GM12878 (cell line): ENCODE measurements at regions of chrX and their contacts with region 1.

Region 1: GRCh38 chrX:133838761-133839676 is 146.4 kb downstream of the GPC3 start:
- DNase-seq: no peak
- ATAC-seq: peak; percentile 47
- H3K4me3 ChIP-seq: no peak overlapping the region
- H3K27ac ChIP-seq: no peak overlapping the region
- H3K4me1 ChIP-seq: no peaks in the 10 kb centered on the region
- H3K27me3 ChIP-seq: no peaks in the 10 kb centered on the region
- CTCF ChIP-seq: peak; percentile 40 to 65 (median 57); a peak in 5 of 6 replicates
- EP300 ChIP-seq: no peak
- POLR2A ChIP-seq: no peak
- RAD21 ChIP-seq: peak; percentile 41; the same call in 1 of the 2 replicates

Region 2: GRCh38 chrX:133921764-133922389 is 82.9 kb after region 1 on chrX:
- CTCF ChIA-PET with region 1: interaction called, 18 read pairs
- POLR2A ChIA-PET with region 1: no interaction called
- RAD21 ChIA-PET with region 1: no interaction called
- SMC1A ChIA-PET with region 1: interaction called, 3 read pairs
- in situ Hi-C with region 1: no loop called
- intact Hi-C with region 1: no loop called
- DNase-seq: no peak
- ATAC-seq: peak; percentile 89
- H3K4me3 ChIP-seq: no peak overlapping the region
- H3K27ac ChIP-seq: no peak overlapping the region
- H3K4me1 ChIP-seq: no peaks in the 10 kb centered on the region
- H3K27me3 ChIP-seq: no peaks in the 10 kb centered on the region
- CTCF ChIP-seq: peak; percentile 59 to 75 (median 68)
- EP300 ChIP-seq: no peak
- POLR2A ChIP-seq: no peak
- RAD21 ChIP-seq: peak; percentile 60

Region 3: GRCh38 chrX:133980406-133981186 is 141.6 kb after region 1 on chrX:
- CTCF ChIA-PET with region 1: no interaction called
- POLR2A ChIA-PET with region 1: no interaction called
- RAD21 ChIA-PET with region 1: no interaction called
- SMC1A ChIA-PET with region 1: no interaction called
- in situ Hi-C with region 1: no loop called
- intact Hi-C with region 1: no loop called
- DNase-seq: no peak
- ATAC-seq: no peak
- H3K4me3 ChIP-seq: no peak overlapping the region
- H3K27ac ChIP-seq: no peak overlapping the region
- H3K4me1 ChIP-seq: no peaks in the 10 kb centered on the region
- H3K27me3 ChIP-seq: no peaks in the 10 kb centered on the region; a peak in 1 of 4 replicates
- CTCF ChIP-seq: no peak
- EP300 ChIP-seq: no peak
- POLR2A ChIP-seq: no peak
- RAD21 ChIP-seq: no peak